K562 (cell line): ENCODE measurements at regions of chr10 and their contacts with region 1.

Region 1: GRCh38 chr10:132654702-132655661 is 117.4 kb downstream of the INPP5A start:
- DNase-seq: peak; percentile 64 to 82 (median 80)
- ATAC-seq: peak; percentile 91
- H3K4me3 ChIP-seq: no peak overlapping the region
- H3K27ac ChIP-seq: no peak overlapping the region
- H3K4me1 ChIP-seq: peaks cover 0 to 19% of the 10 kb centered on the region in 2 experiments; a peak in 2 of 5 replicates
- H3K27me3 ChIP-seq: no peaks in the 10 kb centered on the region
- CTCF ChIP-seq: peak; percentile 80 to 85 (median 81)
- EP300 ChIP-seq: no peak
- POLR2A ChIP-seq: no peak
- RAD21 ChIP-seq: peak; percentile 57 to 76

Region 2: DNA sequence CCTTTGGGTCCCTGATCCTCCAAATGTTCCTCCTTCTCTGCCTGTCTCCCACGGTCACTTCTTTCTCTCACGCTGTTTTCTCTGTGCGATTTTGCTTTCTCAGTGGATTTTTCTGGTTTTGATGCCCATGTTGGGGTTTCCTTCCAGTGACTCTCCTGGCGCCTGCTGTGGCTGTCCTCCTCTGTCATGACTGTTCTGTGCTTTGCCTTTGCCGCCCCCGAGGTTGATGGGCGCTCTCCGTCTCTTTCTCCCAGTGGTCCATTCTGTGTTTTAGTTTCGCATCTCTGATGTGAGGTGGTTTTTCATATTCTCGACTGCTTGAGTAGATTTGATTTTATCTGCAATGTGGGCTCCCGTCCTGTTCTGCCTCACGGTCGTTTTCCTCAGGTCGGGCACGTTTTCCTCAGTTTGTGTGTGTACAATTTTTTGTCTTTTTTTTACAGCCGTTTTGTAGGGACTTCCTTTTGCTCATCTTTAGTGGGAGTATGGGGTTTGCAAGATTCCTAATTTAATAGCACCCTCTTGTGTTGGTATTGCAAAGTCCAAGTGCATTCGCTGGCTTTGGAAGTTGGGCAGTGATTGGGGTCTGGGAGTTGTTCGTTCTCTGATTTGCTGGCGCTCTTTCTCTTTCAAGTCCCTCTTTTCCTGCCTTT is 17.4 kb before region 1 on chr10:
- CTCF ChIA-PET with region 1: no interaction called
- POLR2A ChIA-PET with region 1: no interaction called
- in situ Hi-C with region 1: no loop called
- intact Hi-C with region 1: no loop called
- DNase-seq: peak; percentile 20 to 60 (median 39)
- ATAC-seq: peak; percentile 85
- H3K4me3 ChIP-seq: no peak overlapping the region
- H3K27ac ChIP-seq: no peak overlapping the region
- H3K4me1 ChIP-seq: peaks cover 0 to 7% of the 10 kb centered on the region in 2 experiments; a peak in 2 of 5 replicates
- H3K27me3 ChIP-seq: peaks cover 0 to 23% of the 10 kb centered on the region in 2 experiments; a peak in 2 of 5 replicates
- CTCF ChIP-seq: peak; percentile 52 to 75 (median 63)
- EP300 ChIP-seq: no peak
- POLR2A ChIP-seq: no peak
- RAD21 ChIP-seq: peak; percentile 74 to 79

Region 3: DNA sequence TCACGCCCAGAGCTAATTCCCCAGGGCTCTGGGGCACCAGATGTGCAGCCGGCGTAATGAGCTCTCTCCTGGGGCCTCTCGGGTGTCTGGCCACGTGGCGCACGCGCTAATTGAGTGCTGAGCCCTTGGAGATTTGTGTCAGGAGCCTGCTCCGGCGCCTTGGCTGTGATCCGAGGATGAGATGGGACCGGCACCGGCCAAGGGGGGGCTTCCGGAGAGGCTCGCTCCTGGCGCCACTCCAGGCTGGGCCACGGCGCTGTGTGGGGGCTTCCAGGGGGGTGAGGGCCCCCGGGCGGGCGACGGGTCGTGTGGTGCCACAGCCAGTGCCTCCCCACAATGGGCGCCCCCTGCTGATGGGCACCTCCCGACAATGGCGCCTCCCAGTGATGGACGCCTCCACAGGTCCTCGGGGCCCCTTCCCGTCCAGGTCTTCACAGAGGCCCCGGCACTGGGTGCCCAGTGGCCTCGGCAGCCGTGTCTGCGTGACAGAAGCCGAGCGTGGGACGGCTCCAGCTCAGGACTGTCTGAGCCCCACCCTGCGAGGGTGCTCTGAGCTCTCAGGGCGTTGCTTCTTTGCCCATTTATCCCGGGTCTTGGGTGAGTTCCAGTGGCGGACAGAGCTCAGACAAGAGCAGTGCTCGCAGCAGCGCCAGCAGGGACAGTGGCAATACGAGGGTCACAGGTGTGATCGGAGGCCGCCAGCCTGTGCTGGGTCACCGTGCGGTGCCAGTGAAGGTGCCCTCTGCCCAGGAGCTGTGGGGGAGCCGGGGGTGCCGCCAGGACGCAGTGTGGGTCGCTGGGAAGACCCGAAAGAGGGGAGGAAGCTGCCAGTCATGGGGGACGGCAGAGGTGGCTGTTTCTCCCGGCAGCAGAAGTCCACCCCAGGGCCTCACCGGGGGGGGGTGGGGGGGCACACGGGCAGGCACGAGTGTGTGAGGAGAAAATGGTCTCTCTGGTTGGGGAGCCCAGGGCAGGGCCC is 139.2 kb after region 1 on chr10:
- CTCF ChIA-PET with region 1: interaction called, 3 read pairs
- POLR2A ChIA-PET with region 1: no interaction called
- in situ Hi-C with region 1: no loop called
- intact Hi-C with region 1: loop called (anchors 10 kb)
- DNase-seq: peak in 2 of 4 experiments; percentile 18 to 19
- ATAC-seq: peak; percentile 53; the same call in 2 of the 3 replicates
- H3K4me3 ChIP-seq: no peak overlapping the region
- H3K27ac ChIP-seq: no peak overlapping the region
- H3K4me1 ChIP-seq: peaks cover 0 to 11% of the 10 kb centered on the region in 2 experiments; a peak in 1 of 5 replicates
- H3K27me3 ChIP-seq: peaks cover 2 to 31% of the 10 kb centered on the region in 2 experiments; a peak in 3 of 5 replicates
- CTCF ChIP-seq: peak in 2 of 3 experiments; percentile 28 to 38; a peak in 3 of 6 replicates
- EP300 ChIP-seq: no peak
- POLR2A ChIP-seq: no peak
- RAD21 ChIP-seq: no peak

Region 4: DNA sequence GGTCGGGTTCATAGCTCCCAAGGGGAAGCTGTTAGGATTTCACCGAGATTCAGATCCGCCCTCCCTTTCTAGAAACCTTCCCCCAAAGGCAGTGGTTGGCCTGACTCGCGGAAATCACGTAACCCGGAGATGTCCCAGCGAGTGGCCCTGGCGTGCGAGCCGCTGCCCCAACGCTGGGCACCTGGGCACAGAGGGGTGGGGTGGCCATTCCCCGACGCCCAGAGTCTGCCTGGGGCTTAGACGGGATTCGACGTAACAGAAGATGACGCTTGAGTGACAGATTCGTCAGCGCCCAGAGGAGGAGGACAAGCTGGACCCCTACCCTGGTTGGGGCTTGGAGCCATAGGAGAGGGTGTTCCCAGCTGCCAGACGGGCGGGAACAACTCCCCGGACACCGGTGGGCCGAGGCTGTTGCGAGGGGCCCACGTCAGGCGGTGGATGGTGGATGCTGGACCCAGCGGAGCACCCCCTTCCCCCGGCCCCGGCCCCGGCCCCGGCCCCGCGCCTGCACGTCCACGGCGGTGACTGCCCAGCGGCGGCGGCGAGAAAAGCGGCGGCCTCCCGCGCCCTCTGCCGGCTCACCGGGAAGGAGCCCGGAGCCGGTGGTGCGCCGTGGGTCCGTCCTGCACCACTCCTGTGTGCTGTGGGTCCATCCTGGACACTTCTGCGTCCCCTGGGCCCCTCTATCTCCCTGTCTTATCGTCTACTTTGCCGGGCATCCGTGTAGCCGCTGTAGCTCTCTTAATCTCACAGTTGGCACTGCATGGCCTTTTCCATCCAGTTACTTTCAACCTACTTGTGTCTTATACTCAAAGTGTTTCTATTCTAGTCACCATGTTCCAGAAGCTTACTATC is 469.6 kb after region 1 on chr10:
- CTCF ChIA-PET with region 1: no interaction called
- POLR2A ChIA-PET with region 1: no interaction called
- in situ Hi-C with region 1: loop called (anchors 25 kb)
- intact Hi-C with region 1: no loop called
- DNase-seq: peak; percentile 42 to 61 (median 49)
- ATAC-seq: peak; percentile 95
- H3K4me3 ChIP-seq: no peak overlapping the region
- H3K27ac ChIP-seq: no peak overlapping the region
- H3K4me1 ChIP-seq: peaks cover 0 to 25% of the 10 kb centered on the region in 2 experiments; a peak in 3 of 5 replicates
- H3K27me3 ChIP-seq: no peaks in the 10 kb centered on the region; a peak in 1 of 5 replicates
- CTCF ChIP-seq: peak; percentile 44 to 84 (median 66)
- EP300 ChIP-seq: no peak
- POLR2A ChIP-seq: no peak
- RAD21 ChIP-seq: peak; percentile 43 to 60; a peak in 3 of 4 replicates